ENCODE measurements at regions of chr4 and their contacts with region 1.

Region 1: GRCh38 chr4:98260579-98261290 is 449 bp upstream of the RAP1GDS1 start:
- DNase-seq: peak; percentile 94
- H3K4me3 ChIP-seq: peak overlapping the region; percentile 85
- H3K27ac ChIP-seq: peak overlapping the region; percentile 66
- H3K4me1 ChIP-seq: peaks cover 23% of the 10 kb centered on the region
- CTCF ChIP-seq: no peak

Region 2: DNA sequence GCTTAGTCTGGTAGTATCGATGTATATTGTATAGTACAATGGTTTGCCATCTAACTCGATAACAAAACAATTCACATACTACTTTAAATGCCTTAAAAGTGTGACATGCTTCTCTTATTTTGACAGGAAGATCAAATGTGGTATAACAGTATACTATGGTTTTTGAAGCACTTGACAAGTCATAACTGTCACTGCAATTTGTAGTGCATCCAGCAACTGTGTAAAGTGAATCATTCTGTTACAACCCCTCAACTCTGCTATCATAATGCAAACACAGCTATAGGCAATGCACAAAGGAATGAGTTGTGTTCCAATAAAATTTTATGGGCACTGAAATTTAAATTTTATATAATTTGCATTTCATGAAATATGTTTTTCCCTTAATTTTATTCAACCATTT is 14.4 kb after region 1 on chr4:
- CTCF ChIA-PET with region 1: no interaction called
- POLR2A ChIA-PET with region 1: interaction called, 14 read pairs
- intact Hi-C with region 1: no loop called
- DNase-seq: no peak
- H3K4me3 ChIP-seq: no peak overlapping the region
- H3K27ac ChIP-seq: no peak overlapping the region
- H3K4me1 ChIP-seq: no peaks in the 10 kb centered on the region
- CTCF ChIP-seq: no peak

Region 3: DNA sequence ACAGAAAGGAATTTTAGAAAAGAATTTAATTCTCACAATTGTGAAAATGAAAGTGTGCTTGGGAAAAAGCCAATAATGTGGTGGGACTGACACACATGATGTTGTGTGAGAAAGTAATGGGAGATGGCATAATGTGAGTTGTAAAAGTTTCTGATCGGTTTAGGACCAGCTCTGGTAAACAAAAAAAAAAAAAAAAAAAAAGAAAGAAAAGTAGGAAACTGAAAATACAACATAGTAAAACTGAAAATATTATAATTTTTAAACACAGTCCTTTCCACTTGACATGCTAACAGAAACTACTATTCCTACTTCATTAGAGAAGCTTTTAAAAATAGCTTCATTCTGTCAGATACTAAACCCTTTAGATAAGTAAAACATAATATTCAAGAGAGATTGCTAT is 28.6 kb after region 1 on chr4:
- CTCF ChIA-PET with region 1: interaction called, 3 read pairs
- POLR2A ChIA-PET with region 1: interaction called, 21 read pairs
- intact Hi-C with region 1: loop called (anchors 2 kb)
- DNase-seq: no peak
- H3K4me3 ChIP-seq: peak overlapping the region; percentile 59
- H3K27ac ChIP-seq: peak overlapping the region; percentile 92
- H3K4me1 ChIP-seq: peaks cover 69% of the 10 kb centered on the region
- CTCF ChIP-seq: no peak

Region 4: GRCh38 chr4:98446499-98447375 is 186.0 kb after region 1 on chr4:
- CTCF ChIA-PET with region 1: no interaction called
- POLR2A ChIA-PET with region 1: interaction called, 5 read pairs
- intact Hi-C with region 1: loop called (anchors 2 kb)
- DNase-seq: peak; percentile 65
- H3K4me3 ChIP-seq: peak overlapping the region; percentile 0
- H3K27ac ChIP-seq: peak overlapping the region; percentile 41
- H3K4me1 ChIP-seq: peaks cover 29% of the 10 kb centered on the region
- CTCF ChIP-seq: no peak

Region 5: DNA sequence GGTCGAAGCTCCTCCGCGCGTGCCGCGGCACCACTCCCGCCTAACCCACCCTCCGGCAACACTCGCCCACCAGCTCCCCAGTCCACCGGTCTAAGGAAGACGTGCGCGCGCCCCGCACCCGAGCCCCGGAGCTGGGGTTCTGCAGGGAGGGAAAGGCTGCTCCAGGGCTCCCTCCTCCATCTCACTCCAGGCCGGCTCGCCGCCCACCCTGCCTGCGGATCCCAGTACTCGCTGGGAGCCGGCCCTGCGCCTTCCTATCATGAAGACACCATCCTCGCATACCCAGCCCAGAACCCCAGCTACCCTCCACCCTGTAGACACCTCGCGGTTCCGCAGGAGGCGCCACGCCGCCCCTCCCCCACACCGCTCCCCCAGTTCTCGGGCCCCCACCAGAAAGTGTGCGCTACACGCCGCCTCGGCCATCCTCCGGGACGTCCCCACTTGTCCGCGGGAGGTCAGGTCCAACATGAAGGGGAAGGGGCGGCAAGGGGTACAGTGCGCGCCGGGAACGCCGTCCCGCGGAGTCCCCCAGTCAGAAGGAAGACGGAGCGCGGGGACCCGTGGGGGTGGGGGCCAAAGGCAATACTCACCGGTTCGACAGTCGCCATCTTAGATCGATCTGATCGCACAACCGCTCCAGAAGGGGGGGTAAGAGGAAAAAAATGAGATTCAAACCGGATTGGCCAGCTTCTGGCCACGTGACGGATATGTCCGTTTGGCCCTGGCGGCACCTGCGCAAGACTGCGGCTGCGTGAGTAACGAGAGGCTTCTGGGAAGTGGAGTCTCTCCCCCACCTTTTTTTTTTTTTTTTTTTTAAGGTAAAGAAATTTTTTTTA is 668.0 kb after region 1 on chr4 and contains the start of gene EIF4E:
- CTCF ChIA-PET with region 1: no interaction called
- POLR2A ChIA-PET with region 1: interaction called, 3 read pairs
- intact Hi-C with region 1: loop called (anchors 2 kb)
- DNase-seq: peak; percentile 99
- H3K4me3 ChIP-seq: peak within 1 kb of the TSS; percentile 88
- H3K27ac ChIP-seq: peak within 1 kb of the TSS; percentile 83
- H3K4me1 ChIP-seq: peaks cover 32% of the 10 kb centered on the region
- CTCF ChIP-seq: peak; percentile 45
- total RNA-seq, gene EIF4E: 136 and 152 TPM in 2 replicates

Region 6: GRCh38 chr4:99088481-99089365 is 828.0 kb after region 1 on chr4 and contains the start of gene ADH5:
- CTCF ChIA-PET with region 1: no interaction called
- POLR2A ChIA-PET with region 1: no interaction called
- intact Hi-C with region 1: loop called (anchors 5 kb)
- DNase-seq: peak; percentile 93
- H3K4me3 ChIP-seq: peak within 1 kb of the TSS; percentile 75
- H3K27ac ChIP-seq: peak within 1 kb of the TSS; percentile 50
- H3K4me1 ChIP-seq: peaks cover 23% of the 10 kb centered on the region
- CTCF ChIP-seq: no peak
- total RNA-seq, gene ADH5: 50.0 and 62.6 TPM in 2 replicates

Measured in OCI-LY7 (cell line).